ENCODE measurements at regions of chr7 and their contacts with region 1.

Region 1: DNA sequence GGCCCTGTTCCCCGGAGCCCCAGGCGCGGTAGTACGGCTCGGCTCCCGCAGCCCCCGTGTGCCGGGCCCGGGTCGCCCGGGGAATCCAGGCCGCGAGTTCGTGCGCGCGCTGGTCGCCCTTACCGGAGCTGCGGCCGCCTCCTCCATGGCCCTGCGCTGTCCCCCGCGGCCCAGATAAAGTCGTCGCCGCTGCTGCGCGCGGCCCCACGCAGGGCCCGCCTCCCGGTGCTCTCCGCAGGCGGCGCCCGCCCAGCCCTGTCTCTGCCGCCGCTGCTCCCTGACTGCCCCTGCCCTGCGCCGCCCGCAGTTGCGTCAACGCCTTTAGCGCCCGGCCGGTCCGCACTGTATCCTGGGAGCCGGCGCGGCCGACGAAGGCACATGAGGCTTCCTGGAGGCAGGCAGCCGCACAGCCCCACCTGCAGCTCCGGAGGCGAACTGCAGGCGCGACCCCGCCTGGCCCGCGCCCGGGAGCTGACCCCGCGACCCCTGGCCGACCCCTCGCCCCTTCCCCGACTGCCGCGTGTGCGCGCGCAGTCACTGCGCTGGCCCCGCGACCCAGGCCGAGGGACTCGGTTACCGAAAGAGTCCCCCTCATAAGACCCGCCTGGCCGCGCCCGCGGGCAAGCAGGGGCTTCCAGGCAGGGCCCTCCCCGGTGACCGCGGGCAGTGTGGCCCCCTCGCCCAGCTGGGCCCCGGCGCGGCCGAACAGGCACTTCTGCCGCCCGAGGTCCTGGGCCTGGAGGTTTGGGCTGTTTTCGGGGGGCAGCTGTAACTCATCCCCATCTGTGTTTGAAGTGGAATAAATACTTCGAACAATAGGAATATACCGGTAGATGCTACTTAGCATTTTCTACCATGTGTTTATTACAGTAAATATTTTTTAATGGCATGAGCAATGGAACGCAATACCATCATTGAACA is 127.1 kb upstream of the ZNF746 start:
- DNase-seq: peak; percentile 95
- ATAC-seq: peak; percentile 85
- H3K4me3 Mint-ChIP-seq: peak overlapping the region; percentile 80
- H3K27ac Mint-ChIP-seq: peak overlapping the region; percentile 84
- H3K4me1 Mint-ChIP-seq: peaks cover 39% of the 10 kb centered on the region
- H3K27me3 Mint-ChIP-seq: peaks cover 8% of the 10 kb centered on the region
- CTCF ChIP-seq: peak; percentile 96

Region 2: GRCh38 chr7:149497456-149498261 is 127.0 kb before region 1 on chr7 and contains the start of gene ZNF746:
- CTCF ChIA-PET with region 1: interaction called, 5 read pairs
- POLR2A ChIA-PET with region 1: interaction called, 3 read pairs
- intact Hi-C with region 1: loop called (anchors 10 kb)
- DNase-seq: peak; percentile 85
- ATAC-seq: peak; percentile 96
- H3K4me3 Mint-ChIP-seq: peak within 1 kb of the TSS; percentile 93
- H3K27ac Mint-ChIP-seq: peak within 1 kb of the TSS; percentile 93
- H3K4me1 Mint-ChIP-seq: peaks cover 28% of the 10 kb centered on the region
- H3K27me3 Mint-ChIP-seq: no peaks in the 10 kb centered on the region
- CTCF ChIP-seq: peak; percentile 19
- total RNA-seq, gene ZNF746: 12.6 to 13.0 TPM

Region 3: DNA sequence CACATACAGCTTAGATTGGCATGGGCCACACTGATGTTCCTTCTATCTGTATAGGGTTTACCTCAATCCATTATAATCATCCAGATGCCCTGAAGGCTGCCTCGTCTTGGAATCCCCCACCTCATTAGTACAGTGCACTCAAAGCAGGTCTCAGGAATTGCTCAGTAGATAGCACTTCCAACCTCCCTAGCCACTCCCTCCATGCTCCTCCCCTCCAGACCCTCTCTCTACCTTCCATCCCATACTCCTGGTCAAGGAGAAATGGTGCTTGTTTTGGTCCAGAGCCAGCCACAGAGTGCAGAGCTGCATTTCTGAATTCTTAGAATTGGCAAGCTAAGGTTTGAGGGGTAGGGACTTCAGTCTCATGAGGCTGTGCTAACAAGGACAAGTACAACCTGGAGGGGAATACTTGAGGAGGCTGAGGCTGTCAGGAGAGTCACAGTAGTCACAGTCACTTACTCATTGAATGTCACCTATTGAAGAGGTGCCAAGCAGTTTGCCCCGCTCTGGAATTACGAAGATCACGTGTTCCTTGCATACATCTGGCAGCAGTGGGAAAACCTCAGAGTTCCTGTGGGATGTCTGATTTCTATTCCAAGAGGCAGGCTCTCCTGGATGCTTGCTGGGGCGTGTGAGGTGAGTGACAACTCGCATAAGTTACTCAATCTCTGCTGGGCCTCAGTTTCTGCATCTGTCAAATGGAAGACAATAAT is 66.4 kb before region 1 on chr7:
- CTCF ChIA-PET with region 1: no interaction called
- POLR2A ChIA-PET with region 1: no interaction called
- intact Hi-C with region 1: no loop called
- DNase-seq: no peak
- ATAC-seq: no peak
- H3K4me3 Mint-ChIP-seq: no peak overlapping the region
- H3K27ac Mint-ChIP-seq: no peak overlapping the region
- H3K4me1 Mint-ChIP-seq: no peaks in the 10 kb centered on the region
- H3K27me3 Mint-ChIP-seq: no peaks in the 10 kb centered on the region
- CTCF ChIP-seq: no peak

Region 4: DNA sequence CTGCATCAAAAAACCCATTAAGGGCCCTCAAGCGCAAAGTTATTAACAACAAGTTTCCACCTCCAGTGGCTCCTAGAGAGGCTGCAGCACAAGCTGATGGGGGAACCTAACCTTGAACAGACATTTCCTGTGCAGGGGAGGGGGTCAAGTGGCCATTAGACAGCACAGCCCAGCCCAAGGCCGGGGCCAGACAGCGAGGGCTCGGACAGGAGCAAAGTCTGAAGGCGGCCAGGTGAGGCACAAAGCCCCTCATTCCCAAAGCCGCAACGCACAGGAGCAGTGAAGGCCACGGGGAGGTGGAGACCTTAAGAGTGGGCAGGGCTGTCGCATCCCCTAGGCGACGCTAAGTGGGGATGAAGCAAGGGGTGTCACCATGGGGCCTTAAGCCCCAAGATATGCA is 53.9 kb before region 1 on chr7:
- CTCF ChIA-PET with region 1: no interaction called
- POLR2A ChIA-PET with region 1: no interaction called
- intact Hi-C with region 1: no loop called
- DNase-seq: no peak
- ATAC-seq: no peak
- H3K4me3 Mint-ChIP-seq: no peak overlapping the region
- H3K27ac Mint-ChIP-seq: no peak overlapping the region
- H3K4me1 Mint-ChIP-seq: peaks cover 6% of the 10 kb centered on the region
- H3K27me3 Mint-ChIP-seq: no peaks in the 10 kb centered on the region
- CTCF ChIP-seq: no peak

Region 5: DNA sequence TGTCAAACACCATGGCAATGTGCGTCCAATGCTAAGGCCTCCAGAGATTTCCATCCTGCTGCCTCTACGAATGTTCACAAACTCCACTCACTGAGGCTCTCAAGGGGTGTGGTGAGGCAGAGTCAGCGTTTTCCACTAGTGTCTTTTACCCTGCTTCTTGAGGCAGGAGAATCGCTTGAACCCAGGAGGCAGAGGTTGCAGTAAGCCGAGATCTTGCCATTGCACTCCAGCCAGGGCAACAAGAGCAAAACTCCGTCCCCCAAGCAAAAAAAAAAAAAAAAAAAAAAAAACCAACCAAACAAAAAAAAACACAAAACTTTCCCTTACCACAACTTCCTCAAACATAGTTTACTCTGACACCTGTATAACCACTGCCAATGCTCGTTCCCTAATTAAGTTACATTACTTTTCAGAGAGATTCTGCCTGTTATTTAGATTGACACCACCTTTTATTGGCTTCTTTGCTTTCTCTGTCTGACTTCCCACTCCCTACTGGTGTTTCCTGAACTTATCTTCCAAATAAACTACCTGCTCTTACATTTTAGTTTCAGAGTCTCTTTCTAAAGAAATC is 25.0 kb before region 1 on chr7:
- CTCF ChIA-PET with region 1: interaction called, 9 read pairs
- POLR2A ChIA-PET with region 1: interaction called, 7 read pairs
- intact Hi-C with region 1: loop called (anchors 1 kb)
- DNase-seq: no peak
- ATAC-seq: no peak
- H3K4me3 Mint-ChIP-seq: peak overlapping the region; percentile 58
- H3K27ac Mint-ChIP-seq: peak overlapping the region; percentile 79
- H3K4me1 Mint-ChIP-seq: peaks cover 35% of the 10 kb centered on the region
- H3K27me3 Mint-ChIP-seq: no peaks in the 10 kb centered on the region
- CTCF ChIP-seq: no peak